Cardiac septum (tissue), 1 donor: ENCODE measurements at regions of chr3 and their contacts with region 1.

Region 1: DNA sequence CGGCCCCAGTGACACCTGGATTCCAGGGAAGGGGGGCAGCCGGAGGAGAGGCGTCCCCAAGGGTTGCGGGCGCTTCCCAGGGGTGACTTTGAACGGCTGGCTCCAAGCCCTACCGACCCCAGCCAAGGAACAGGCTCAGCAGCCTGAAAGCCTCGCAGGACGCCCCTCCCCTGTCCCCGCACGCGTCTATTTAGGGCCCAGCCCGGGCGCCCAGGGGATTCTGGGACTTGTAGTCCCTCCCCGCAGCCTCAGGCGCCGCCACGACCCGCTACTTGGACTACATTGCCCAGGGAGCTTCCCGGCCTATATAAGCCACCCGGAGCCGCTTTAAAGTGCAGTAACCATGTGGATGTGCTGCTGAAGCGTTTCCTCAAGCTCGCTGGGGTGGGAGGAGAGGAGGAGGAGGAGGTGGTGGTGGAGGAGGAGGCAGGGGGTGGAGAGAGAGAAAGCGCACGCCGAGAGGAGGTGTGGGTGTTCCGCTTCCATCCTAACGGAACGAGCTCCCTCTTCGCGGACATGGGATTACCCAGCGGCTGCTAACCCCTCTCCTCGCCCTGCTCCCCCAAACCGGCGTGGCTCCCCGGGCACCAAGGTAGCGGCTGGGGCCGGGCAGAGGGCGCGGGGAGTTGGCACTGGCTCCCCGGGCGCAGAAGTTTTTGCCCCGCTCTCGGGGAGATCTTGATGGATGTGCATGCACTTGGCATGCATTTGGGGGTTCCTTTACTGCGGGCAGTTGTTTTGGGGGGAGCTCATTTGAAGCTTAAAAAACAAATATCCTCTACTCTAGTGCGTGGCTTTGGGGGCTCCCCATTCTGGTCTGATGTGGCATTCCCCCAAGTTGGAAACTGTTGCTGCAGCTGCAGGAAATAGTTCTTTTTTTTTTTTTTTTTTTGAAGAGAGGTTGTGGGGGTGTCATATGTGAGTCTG is at the start of gene ITPR1:
- DNase-seq: peak; percentile 99
- total RNA-seq, gene ITPR1: 19.5 TPM

Region 2: GRCh38 chr3:4350789-4351163 is 142.5 kb before region 1 on chr3:
- intact Hi-C with region 1: loop called (anchors 5 kb)
- DNase-seq: no peak

Region 3: DNA sequence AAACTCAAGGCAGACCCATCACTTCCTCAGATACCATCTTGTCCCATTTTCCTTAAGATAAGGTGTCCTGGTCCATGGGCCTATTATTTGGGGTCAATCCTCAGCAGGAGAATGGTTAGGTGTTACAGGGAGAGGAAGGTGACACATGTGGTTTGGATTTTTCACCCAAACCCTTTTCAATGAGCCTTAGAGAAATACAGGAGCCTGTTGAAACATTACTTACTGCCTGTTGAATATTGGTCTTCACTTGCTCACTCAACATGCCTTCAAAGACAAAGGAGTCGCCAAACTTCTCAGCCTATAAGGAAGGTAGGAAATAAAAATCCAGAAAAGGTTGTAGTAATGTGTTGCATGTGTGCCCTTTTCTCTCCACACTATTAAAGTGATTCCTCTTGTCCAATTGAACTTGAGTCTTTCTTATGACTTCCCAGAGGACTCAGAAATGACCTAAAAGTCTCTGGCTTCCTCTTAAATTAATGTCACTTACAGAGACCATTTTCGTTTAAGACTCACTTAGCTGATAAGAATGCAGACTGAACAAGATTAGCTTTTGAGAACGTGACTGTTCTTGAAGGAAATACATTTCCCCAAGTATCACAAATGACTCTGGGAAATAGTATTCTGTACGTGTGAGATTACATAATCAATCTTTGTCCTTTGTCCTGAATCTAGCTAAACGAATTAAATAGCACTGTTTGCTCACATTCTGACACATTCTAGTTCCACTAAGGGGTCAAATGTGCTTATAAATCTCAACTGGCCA is 44.1 kb before region 1 on chr3:
- intact Hi-C with region 1: no loop called
- DNase-seq: no peak

Region 4: DNA sequence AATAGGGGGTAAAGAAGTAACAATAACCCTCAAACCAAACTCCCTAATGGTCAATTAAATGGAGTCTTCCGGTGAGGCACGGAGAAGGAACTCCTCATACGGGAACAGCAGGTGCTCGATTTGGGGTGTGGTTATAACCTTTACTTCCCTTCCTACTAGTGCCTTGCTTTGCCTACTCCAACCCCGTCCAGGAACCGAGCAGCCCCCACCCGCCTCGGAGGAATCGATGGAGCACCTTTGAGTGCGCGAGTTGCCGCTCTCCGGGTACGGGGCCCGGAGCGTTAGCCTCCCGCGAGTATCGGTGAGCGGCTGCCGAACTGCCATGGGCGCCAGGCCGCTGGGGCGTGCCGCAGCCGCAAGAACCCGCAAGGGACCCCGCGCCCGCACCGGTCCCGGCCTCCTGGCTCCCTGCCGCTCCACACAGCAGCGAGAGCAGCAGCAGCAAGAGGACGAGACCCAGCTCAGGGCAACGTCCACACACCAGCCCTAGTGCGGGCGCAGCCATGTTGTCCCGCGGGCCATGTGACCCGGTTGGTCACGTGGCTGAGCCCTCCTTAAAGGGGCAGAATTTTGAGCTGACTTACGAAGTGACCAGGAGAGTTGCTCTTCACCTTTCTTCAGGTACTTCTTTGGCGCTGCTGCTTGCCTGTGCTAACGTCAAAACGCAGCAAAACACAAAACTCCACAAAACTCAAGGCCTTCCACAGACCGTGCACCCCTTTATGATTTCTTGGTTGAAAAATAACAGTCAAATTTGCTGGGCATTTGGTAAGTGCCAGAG is 26.3 kb before region 1 on chr3 and contains the start of gene SUMF1:
- intact Hi-C with region 1: loop called (anchors 1 kb)
- DNase-seq: peak; percentile 92
- total RNA-seq, gene SUMF1: 10.4 TPM

Region 5: GRCh38 chr3:4584456-4585249 is 91.4 kb after region 1 on chr3:
- intact Hi-C with region 1: loop called (anchors 5 kb)
- DNase-seq: no peak

Region 6: DNA sequence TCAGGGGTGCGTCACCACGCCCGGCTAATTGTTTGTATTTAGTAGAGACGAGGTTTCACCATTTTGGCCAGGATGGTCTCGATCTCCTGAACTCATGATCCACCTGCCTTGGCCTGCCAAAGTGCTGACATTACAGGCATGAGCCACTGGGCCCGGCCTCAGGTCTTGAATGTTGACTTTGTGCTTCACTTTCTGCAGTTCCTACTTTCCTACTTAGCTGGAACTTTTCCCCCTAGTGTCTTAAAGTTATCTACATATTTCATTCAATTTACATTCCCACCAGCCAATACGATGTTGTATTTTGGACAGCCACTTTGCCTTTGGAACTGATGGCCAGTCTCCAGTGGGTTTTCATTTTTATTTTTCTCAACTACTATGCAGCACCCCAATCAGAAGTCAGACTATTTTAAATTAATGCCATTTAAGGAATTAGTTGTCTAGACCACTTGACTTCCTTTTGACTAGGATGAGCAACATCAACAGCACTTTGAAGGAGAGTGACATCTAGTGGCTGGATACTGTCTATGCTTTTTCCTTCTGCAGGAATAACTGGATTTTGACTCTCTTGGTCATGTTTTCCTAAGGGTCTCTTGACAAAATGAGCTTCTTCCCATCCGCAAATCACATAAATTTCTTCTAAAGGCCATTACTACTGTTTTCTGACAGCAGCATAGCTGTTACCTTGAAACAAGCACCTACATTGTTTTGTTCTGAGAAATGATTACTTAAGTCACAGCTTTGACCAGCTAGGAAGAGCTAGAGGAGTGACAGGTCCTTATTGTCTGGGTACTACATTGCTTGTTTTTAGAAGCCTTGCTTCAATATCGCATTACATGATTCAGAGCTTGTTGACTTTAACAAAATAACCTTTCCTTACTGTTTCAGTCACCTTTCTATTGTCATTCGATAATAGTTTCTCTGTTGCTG is 140.1 kb after region 1 on chr3:
- intact Hi-C with region 1: loop called (anchors 10 kb)
- DNase-seq: no peak

Region 7: DNA sequence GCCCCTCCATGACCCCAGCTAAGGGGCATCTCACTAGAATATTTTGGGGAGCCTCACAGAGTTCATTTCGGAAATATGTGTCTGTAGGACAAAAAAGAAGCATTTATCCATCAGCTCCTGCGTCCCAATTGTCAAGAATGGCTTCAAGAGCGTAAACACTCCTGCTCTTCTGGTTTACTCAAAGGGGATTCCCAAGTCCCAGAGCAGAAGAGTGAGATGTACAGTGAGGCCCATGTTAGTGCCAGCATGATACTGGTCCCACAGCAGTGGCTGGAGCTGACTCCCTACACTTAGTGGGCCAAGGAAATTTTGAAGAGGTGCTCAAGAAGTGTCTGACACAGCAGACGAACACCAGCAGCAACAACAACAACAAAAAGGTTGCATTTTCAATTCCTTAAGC is 593.9 kb after region 1 on chr3:
- intact Hi-C with region 1: no loop called
- DNase-seq: no peak

Region 8: DNA sequence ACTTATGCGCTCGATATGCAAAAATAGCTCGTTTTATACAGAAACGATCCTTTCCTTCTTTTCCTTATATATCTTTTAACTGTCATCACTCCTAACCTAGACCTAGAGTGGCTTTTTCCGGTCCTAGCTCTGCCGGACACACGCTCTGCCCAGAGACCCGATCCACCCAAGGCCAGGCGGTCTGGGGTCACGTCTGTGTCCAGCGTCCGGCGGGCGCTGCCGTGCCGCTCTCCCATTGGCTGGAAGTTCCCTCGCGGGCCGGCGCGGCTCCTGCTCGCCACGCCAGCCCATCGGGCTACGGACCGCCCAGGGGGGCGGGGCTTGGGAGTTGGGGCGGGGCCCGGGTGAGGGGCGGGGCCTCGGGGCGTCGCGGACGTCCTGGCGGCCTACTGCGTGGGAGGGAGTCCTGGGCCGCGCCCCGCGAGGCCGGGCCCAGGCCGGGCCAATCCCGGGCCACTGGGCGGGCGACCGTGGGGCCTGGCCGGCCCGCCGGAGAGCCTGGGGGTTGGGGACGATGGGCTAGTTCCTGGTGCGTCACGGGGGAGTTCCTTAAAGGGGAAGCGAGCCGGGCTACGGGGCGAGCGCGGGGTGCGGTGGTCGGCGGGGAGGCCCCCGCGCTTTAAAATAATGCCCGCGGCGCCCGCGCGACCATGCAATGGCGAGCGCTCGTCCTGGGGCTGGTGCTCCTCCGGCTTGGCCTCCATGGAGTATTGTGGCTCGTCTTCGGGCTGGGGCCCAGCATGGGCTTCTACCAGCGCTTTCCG is 694.1 kb after region 1 on chr3 and contains the start of gene EDEM1:
- intact Hi-C with region 1: loop called (anchors 5 kb)
- DNase-seq: peak; percentile 99
- total RNA-seq, gene EDEM1: 10.3 TPM